ENCODE measurements at regions of chr12 and their contacts with region 1.

Region 1: GRCh38 chr12:62799126-62799736 is 135.7 kb downstream of the PPM1H start:
- DNase-seq: peak; percentile 71
- CTCF ChIP-seq: peak; percentile 81

Region 2: DNA sequence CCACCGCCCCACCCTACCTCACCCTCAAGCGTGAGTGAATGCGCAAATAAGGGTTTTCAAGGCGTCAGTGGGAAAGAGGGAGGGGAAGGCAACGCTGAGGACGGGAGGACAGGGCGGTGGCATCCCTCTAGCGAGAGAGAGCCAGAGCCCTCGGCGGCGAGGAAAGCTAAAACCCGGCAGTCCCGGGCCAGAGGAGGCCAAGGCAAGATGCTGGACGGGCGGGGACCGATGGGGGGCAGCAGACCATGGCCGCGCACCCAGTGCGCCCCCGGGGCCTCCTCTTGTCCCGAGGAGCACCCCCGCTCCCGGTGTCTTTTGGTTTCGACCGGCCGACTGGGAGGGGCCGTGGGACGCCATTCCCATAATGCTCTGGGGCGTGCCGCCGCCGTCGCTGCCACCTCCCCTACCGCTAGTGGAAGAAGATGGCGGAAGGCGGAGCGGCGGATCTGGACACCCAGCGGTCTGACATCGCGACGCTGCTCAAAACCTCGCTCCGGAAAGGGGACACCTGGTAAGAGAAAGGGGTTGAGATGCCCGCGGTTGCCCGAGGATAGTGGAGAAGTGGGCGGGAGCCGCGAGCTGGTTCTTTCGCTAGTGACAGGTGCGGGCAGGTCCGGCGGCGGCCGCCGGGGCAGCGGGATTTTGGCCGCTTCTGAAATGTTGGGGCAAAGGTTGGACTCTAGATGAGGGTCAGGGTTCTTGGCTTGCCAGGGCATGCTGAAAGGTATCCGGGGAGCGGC is 539.1 kb before region 1 on chr12 and contains the start of gene USP15:
- in situ Hi-C with region 1: loop called (anchors 25 kb)
- DNase-seq: peak; percentile 91
- CTCF ChIP-seq: peak; percentile 76

Region 3: GRCh38 chr12:62435303-62436163 is 363.7 kb before region 1 on chr12:
- in situ Hi-C with region 1: loop called (anchors 5 kb)
- DNase-seq: peak; percentile 76
- CTCF ChIP-seq: peak; percentile 55

Region 4: DNA sequence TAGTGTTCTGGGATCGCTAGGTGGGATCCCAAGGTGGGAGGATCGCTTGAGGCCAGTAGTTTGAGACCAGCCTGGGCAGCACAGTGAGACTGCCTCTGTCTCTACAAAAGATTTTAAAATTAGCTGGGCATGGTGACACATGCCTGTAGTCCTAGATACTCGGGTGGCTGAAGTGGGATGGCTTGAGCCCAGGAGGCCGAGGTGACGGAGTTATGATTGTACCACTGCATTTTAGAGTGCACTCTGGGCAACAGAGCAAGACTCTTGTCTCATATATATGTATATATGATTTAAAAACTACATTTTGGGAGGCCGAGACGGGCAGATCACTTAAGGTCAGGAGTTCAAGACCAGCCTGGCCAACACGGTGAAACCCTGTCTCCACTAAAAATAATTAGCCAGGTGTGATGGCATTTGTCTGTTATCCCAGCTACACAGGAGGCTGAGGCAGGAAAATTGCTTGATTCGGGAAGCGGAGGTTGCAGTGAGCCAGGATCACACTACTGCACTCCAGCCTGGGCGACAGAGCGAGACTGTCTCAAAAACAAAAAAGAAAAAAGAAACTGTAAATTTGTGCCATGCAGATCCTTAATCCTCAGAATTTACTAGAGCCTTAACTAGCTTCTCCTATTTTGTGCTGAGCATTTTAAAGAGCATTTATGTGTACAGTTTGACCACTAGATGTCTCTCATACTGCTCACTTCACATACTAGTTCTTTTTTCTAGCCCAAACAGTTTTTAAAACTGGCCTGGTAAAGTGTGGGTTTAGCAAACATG is 217.8 kb before region 1 on chr12:
- in situ Hi-C with region 1: loop called (anchors 10 kb)
- DNase-seq: peak; percentile 50
- CTCF ChIP-seq: peak; percentile 49

Region 5: GRCh38 chr12:62934799-62935674 is 135.8 kb after region 1 on chr12 and contains the start of gene PPM1H:
- in situ Hi-C with region 1: no loop called
- DNase-seq: peak; percentile 81
- CTCF ChIP-seq: no peak

Region 6: DNA sequence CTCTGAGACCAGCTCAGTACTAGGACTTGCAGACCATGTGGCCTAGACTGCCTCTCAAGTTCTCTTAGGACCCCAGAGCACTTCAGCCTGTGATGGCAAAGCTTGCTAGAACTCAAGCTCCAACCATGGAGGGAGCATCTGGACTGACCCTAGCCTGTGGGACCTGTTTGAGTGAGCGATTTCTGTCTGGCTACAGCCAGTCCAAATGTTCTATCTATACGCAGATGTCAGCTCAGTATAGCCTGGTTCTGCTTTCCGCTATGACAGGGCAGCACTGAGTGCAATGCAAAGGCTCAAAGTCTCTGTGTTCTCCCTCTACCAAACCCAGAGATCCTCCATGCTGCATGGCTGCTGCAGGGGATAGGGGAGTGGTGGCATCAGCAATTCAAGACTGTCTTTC is 156.4 kb after region 1 on chr12:
- in situ Hi-C with region 1: no loop called
- DNase-seq: no peak
- CTCF ChIP-seq: no peak

Region 7: DNA sequence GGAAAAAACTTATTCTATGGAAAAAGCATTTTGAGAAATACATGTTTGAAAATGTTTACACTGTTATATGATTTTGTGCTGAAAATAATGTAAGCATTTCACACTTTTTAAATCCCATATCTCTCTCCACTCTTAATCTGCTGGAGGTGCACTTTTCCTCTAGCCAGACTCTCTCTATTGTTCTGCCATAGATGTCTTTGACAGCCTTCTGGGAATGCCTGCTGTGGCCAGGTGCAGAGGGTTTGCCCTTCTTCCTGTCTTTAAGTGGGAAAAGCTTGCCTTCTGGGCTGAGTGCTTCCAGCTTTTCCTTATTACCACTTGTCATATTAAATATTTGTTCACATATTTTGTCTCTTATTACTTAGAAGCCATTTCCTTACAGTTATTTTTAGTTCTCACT is 195.9 kb after region 1 on chr12:
- in situ Hi-C with region 1: no loop called
- DNase-seq: no peak
- CTCF ChIP-seq: no peak

Measured in GM13976 (cell line).